ENCODE measurements at regions of chr6 and their contacts with region 1.

Region 1: DNA sequence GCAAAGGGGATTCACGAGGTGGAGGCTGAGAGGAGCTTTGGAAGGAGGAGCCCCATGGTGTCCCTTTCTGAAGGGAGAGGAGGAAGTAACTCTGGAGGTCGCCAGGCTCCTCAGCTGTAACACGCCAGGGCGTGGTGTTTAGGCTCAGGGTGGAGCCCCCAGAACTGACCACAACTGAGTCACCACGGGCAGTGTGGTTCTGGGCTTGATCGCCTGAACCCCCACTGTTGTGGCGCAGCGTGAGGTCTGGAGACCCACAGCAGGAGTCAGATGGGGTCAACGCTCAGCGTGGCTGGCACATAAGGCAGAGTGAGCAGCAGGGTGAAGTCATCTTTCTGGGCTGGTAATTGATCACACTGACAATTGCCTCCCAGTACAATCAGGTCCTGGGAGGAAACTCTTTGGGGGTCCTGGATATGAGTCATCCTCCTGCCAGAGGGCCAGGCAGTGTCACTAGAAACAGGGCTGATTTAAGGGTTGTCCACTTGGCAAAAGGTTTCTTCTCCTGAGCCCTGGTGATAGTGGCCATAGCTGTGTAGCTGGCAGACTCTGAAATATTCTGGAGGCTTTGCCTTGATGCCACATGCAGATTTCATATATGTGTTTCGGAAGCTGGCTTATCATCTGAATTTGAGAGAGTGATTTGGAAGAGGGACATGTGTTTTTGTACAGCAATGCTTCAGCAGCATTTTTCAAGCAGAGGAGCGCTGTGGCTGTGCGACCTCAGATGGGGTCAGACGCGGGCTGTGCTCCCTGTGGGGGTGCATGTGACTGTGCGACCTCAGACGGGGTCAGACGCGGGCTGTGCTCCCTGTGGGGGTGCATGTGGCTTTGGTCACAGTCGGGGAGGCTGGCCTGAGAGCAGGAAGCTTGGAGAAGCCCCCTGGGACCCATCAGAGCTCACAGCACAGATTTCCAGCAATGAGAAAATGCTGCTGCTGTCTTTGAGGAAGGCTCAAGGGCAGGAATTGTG is 50.0 kb downstream of the SYNJ2 start:
- DNase-seq: peak in 3 of 5 donors; percentile 7 to 14 (median 11)
- H3K4me3 ChIP-seq: no peak overlapping the region
- H3K4me3 Mint-ChIP-seq: peak overlapping the region in 4 of 8 donors; percentile 30 to 54 (median 46)
- H3K27ac ChIP-seq: no peak overlapping the region
- H3K27ac Mint-ChIP-seq: peak overlapping the region; percentile 80 to 93 (median 87)
- H3K4me1 ChIP-seq: peaks cover 35% of the 10 kb centered on the region
- H3K4me1 Mint-ChIP-seq: peaks cover 23 to 39% (median 29%) of the 10 kb centered on the region in 4 donors
- H3K27me3 ChIP-seq: no peaks in the 10 kb centered on the region
- H3K27me3 Mint-ChIP-seq: no peaks in the 10 kb centered on the region

Region 2: DNA sequence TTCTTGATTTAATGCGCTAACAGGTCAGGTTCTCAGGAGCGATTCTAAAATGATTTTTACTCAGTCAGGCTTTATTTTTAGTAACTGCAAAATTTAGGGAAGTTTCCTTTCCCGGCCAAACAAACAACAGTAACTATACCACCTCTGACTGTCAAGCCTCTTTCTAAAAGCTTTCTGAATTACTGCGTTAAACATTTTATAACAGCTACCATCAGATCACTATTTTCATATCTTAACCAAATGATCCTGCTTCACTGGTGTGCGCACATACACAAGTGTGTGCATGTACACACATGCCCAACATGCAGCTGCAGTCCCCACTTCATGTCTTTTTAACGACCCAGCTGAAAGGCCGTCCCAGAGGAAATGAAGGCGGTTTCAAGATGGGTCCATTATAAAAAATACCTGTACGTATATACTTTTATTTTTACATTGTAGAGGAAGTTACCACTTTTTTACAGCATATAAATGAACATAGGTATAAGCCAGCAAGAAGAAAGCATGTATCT is 733.4 kb before region 1 on chr6:
- CTCF ChIA-PET with region 1: no interaction called
- POLR2A ChIA-PET with region 1: no interaction called
- intact Hi-C with region 1: no loop called
- DNase-seq: no peak
- H3K4me3 ChIP-seq: no peak overlapping the region
- H3K4me3 Mint-ChIP-seq: no peak overlapping the region
- H3K27ac ChIP-seq: no peak overlapping the region
- H3K27ac Mint-ChIP-seq: no peak overlapping the region
- H3K4me1 ChIP-seq: no peaks in the 10 kb centered on the region
- H3K4me1 Mint-ChIP-seq: peaks cover 6 to 8% (median 8%) of the 10 kb centered on the region in 4 donors
- H3K27me3 ChIP-seq: no peaks in the 10 kb centered on the region
- H3K27me3 Mint-ChIP-seq: no peaks in the 10 kb centered on the region

Region 3: DNA sequence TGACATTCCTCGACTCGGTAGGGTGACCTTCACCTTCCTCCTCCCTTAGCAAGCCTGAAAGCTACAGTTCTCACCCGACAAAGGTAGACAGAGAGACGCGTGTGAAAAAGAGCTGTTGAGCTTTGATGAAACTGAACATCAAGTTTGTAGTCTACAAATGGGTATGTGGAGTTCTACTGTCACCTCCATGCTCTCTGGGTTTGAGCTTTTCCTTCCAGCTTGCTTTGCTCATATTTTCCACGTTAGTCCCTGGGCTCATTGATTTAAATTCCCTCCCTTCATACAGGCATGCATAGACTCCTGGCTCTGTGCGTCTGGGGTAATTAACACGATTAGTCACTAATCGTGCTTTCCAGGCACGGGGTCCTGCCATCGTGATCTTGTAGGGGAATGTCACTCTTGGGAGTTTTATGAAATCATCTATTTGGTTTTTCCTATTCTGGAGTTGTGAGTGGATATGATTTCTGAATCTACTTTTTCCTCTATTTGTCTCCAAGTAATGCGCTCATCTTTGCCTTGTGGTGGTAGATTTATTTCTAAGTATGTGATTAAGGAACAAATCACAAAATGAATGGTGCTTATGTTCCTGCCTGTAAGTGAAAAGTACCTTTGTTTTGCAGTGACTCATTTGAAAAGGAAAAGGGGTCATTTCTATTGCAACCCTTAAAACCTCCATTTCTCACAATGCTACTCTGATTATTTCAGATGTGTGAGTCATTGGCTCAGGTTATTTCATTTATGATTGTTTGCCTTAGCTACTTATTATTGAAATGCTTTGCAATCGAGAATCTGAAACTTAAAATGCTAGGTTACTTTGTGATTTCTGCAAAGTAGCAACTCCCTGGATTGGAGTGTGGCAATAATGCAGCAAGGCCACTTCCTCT is 496.1 kb before region 1 on chr6:
- CTCF ChIA-PET with region 1: no interaction called
- POLR2A ChIA-PET with region 1: no interaction called
- intact Hi-C with region 1: no loop called
- DNase-seq: peak in 4 of 5 donors; percentile 26 to 48 (median 40)
- H3K4me3 ChIP-seq: no peak overlapping the region
- H3K4me3 Mint-ChIP-seq: peak overlapping the region in 7 of 8 donors; percentile 18 to 79 (median 65)
- H3K27ac ChIP-seq: peak overlapping the region; percentile 2
- H3K27ac Mint-ChIP-seq: peak overlapping the region; percentile 61 to 89 (median 83)
- H3K4me1 ChIP-seq: peaks cover 41% of the 10 kb centered on the region
- H3K4me1 Mint-ChIP-seq: peaks cover 25 to 48% (median 38%) of the 10 kb centered on the region in 4 donors
- H3K27me3 ChIP-seq: no peaks in the 10 kb centered on the region
- H3K27me3 Mint-ChIP-seq: no peaks in the 10 kb centered on the region

Region 4: GRCh38 chr6:158060455-158061360 is 29.0 kb after region 1 on chr6:
- CTCF ChIA-PET with region 1: interaction called, 28 read pairs
- POLR2A ChIA-PET with region 1: interaction called, 12 read pairs
- intact Hi-C with region 1: loop called (anchors 2 kb)
- DNase-seq: peak in 4 of 5 donors; percentile 11 to 30 (median 24)
- H3K4me3 ChIP-seq: no peak overlapping the region
- H3K4me3 Mint-ChIP-seq: peak overlapping the region in 4 of 8 donors; percentile 18 to 48 (median 31)
- H3K27ac ChIP-seq: peak overlapping the region; percentile 24
- H3K27ac Mint-ChIP-seq: peak overlapping the region; percentile 52 to 95 (median 81)
- H3K4me1 ChIP-seq: peaks cover 47% of the 10 kb centered on the region
- H3K4me1 Mint-ChIP-seq: peaks cover 12 to 39% (median 28%) of the 10 kb centered on the region in 4 donors
- H3K27me3 ChIP-seq: no peaks in the 10 kb centered on the region
- H3K27me3 Mint-ChIP-seq: no peaks in the 10 kb centered on the region